GM10248 (cell line): ENCODE measurements at regions of chr6 and their contacts with region 1.

Region 1: GRCh38 chr6:44221291-44221960 is 2.0 kb upstream of the SLC29A1 start:
- DNase-seq: peak; percentile 84
- CTCF ChIP-seq: peak; percentile 97

Region 2: GRCh38 chr6:44207966-44208365 is 13.5 kb before region 1 on chr6:
- CTCF ChIA-PET with region 1: interaction called, 12 read pairs
- POLR2A ChIA-PET with region 1: interaction called, 4 read pairs
- DNase-seq: no peak
- CTCF ChIP-seq: no peak

Region 3: GRCh38 chr6:44237813-44238433 is 16.5 kb after region 1 on chr6:
- CTCF ChIA-PET with region 1: interaction called, 116 read pairs
- POLR2A ChIA-PET with region 1: interaction called, 6 read pairs
- DNase-seq: peak; percentile 87
- CTCF ChIP-seq: peak; percentile 95

Region 4: GRCh38 chr6:44246663-44247337 is 25.4 kb after region 1 on chr6 and contains the start of gene HSP90AB1:
- CTCF ChIA-PET with region 1: interaction called, 40 read pairs
- POLR2A ChIA-PET with region 1: interaction called, 21 read pairs
- DNase-seq: peak; percentile 93
- CTCF ChIP-seq: no peak